ENCODE measurements at regions of chr20 and their contacts with region 1.

Region 1: DNA sequence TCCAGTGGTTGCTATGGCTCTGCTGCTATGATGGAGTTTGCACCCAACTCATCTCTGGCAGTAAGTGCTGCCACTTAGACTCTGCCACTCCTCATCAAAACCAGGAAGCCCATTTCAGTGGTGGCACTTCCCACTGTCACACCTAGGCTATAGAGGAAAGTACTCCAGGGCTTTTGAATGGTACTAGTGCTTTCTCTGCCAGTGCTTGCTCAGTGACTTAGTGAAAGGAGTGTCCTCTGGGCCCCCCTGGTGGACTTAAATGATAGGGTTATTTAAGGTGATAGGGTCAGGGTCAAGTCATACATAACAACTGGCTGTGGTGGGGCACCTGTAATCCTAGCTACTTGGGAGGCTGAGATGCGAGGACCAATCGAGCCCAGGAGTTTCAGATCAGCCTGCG is 22.8 kb downstream of the FITM2 start:
- DNase-seq: no peak
- ATAC-seq: peak; percentile 62

Region 2: DNA sequence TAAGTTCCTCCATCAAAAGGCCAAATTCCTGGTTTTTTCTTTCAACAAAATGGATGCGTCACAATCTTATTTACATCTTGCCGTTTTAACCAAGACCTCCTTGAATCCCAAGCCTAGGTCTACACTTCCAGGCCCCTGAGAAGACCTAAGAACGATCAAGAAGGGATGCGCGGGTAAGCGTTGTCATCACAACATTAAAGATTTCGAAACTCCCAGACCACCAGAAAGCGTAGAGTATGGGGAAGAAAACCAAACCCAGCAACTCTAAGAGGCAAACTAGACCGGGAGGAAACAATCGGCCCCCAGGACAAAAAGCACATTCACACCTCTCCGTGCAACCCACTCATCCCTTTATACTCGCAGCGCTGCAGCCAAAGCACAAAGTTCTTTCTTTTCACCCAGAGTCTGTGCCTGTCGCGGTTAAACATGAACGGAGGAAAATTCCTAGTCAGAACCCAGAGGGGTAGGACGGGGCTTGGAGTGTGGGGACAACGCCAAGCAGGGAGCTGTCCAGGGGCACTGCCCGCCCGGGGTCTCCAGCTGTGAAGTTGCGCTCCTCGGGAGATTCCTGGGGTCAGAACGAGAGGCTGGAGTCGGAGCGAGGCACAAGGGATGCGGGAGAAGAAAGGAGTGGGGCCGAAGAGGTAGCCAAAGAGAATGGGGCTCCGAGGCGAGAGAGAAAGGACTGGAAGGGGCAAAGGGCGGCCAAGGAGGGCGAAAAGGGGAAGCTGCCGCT is 78.4 kb before region 1 on chr20:
- intact Hi-C with region 1: no loop called
- DNase-seq: no peak
- ATAC-seq: no peak

Region 3: DNA sequence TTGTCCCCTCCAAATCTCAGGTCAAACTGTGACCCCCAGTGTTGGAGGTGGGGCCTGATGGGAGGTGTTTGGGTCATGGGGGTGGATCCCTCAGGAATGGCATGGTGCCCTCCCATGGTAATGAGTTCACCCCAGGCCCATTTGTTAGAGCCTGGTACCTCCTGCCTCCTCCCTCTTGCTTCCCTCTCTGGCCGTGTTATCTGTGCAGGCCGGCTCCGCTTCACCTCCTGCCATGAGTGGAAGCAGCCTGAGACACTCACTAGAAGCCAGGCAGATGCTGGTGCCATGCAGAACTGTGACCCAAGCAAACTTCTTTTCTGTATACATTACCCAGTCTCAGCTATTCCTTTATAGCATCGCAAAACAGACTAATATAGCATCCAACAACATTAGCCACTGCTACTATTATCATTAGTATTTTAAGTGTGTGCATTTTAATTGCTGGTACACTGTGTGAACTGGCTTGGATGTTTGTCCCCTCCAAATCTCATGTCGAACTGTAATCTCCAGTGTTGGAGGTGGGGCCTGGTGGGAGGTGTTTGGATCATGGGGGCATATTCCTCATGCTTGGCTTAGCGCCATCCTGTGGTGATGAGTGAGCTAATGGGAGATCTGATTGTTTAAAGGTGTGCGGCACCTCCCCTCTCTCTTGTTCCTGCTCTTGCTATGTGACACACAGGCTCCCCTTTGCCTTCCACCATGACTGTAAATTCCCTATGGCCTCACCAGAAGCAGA is 65.5 kb before region 1 on chr20:
- intact Hi-C with region 1: loop called (anchors 5 kb)
- DNase-seq: no peak
- ATAC-seq: peak; percentile 77

Region 4: DNA sequence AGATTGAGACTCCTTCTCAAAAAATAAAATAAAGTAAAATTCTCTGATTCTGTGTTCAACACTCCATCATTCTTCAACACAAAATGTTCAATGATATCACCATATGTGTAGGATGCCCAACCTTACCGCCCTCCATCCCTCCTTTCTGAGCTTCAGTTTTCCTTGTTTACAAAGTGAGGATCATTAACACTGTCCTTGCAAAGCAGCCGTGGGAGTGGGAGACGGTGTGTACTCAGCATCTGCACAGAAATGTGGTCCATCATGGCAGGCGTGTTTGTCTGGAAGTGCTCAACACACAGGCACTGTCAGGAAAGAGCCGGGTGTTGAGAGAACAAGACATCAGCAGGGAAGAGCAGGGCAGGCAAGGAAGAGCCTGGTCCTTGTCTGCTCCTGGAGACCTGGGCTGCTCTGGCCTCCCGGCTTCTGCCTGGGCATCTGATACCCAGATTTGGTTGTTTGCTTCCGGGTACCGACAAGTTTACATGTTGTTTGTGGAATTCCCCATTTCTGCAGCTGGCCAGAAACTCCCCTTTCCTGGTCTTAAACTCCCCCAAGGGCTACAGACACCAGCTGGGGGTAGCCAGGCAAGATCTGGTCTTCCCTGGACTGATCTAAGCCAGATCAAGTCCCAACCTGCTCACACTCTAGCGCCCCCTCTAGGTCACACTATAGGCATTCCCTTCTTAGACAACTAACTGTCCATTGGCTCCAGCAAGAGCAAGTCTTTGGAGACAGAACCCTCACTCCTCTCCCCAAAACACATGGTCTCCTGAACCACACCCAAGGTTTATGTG is 160.7 kb after region 1 on chr20:
- intact Hi-C with region 1: no loop called
- DNase-seq: no peak
- ATAC-seq: no peak

Measured in Right ventricle myocardium inferior (tissue), 1 donor.